ENCODE measurements at regions of chr7 and their contacts with region 1.

Region 1: DNA sequence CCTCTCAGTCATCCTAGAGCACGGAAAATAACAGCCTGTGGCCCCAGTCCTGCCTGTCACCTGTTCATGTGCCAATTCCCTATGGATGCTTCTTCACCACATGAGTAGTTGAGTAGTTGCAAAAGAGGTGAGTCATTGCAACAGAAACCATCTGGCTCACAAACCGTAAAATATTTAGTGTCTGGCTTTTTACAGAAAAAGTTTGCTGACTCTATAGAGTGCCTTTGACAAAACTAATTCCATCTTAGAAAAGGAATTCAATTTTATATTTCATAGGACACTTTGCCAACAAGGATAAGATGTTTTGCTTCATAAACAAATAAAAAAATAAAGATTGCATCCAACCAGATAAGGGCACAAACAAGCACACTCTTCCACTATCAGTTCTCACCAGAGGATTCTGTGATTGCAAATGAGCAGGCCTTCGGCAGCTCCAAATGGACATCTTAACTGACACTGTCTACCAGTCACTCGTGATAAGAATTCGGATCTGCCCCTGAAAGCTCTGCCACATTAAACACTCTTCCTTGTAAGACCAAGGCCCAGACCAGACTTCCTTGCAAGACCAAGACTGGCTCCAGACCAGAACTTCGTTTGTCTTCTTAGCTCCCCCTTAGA is 242.7 kb upstream of the SEMA3C start:
- DNase-seq: peak; percentile 96
- H3K4me3 Mint-ChIP-seq: no peak overlapping the region
- H3K27ac Mint-ChIP-seq: peak overlapping the region; percentile 73
- H3K4me1 Mint-ChIP-seq: peaks cover 22% of the 10 kb centered on the region
- H3K27me3 Mint-ChIP-seq: no peaks in the 10 kb centered on the region
- CTCF ChIP-seq: no peak

Region 2: GRCh38 chr7:81173766-81174281 is 12.3 kb after region 1 on chr7:
- CTCF ChIA-PET with region 1: no interaction called
- POLR2A ChIA-PET with region 1: interaction called, 13 read pairs
- intact Hi-C with region 1: no loop called
- DNase-seq: peak; percentile 90
- H3K4me3 Mint-ChIP-seq: peak overlapping the region; percentile 60
- H3K27ac Mint-ChIP-seq: peak overlapping the region; percentile 88
- H3K4me1 Mint-ChIP-seq: peaks cover 18% of the 10 kb centered on the region
- H3K27me3 Mint-ChIP-seq: no peaks in the 10 kb centered on the region
- CTCF ChIP-seq: no peak

Region 3: GRCh38 chr7:81339946-81340345 is 178.4 kb after region 1 on chr7:
- CTCF ChIA-PET with region 1: no interaction called
- POLR2A ChIA-PET with region 1: no interaction called
- intact Hi-C with region 1: no loop called
- DNase-seq: no peak
- H3K4me3 Mint-ChIP-seq: no peak overlapping the region
- H3K27ac Mint-ChIP-seq: no peak overlapping the region
- H3K4me1 Mint-ChIP-seq: no peaks in the 10 kb centered on the region
- H3K27me3 Mint-ChIP-seq: no peaks in the 10 kb centered on the region
- CTCF ChIP-seq: no peak